IMR-90 (cell line): ENCODE measurements at regions of chr9 and their contacts with region 1.

Region 1: DNA sequence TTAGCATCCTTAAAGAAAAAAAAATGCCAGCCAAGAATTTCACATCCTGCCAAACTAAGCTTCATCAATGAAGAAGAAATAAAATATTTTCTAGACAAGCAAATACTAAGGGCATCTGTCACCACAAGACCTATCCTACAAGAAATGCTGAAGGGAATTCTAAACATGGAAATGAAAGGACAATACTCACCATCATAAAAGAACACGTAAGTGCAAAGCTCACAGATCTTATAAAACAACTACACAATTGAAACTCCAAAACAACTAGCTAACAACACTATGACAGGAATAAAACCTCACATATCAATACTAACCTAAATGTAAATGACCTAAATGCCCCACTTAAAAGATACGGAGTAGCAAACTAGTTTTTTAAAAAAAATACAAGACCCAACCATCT is 71.4 kb downstream of the TTC39B start:
- DNase-seq: no peak
- ATAC-seq: no peak
- H3K4me3 ChIP-seq: no peak overlapping the region
- H3K27ac ChIP-seq: no peak overlapping the region
- H3K4me1 ChIP-seq: no peaks in the 10 kb centered on the region
- H3K27me3 ChIP-seq: no peaks in the 10 kb centered on the region
- CTCF ChIP-seq: no peak
- POLR2A ChIP-seq: no peak
- RAD21 ChIP-seq: no peak

Region 2: GRCh38 chr9:15222313-15222712 is 13.3 kb before region 1 on chr9:
- CTCF ChIA-PET with region 1: no interaction called
- POLR2A ChIA-PET with region 1: no interaction called
- dilution Hi-C with region 1: no loop called
- in situ Hi-C with region 1: no loop called
- intact Hi-C with region 1: loop called (anchors 2 kb)
- DNase-seq: no peak
- ATAC-seq: no peak
- H3K4me3 ChIP-seq: no peak overlapping the region
- H3K27ac ChIP-seq: no peak overlapping the region
- H3K4me1 ChIP-seq: peaks cover 9% of the 10 kb centered on the region
- H3K27me3 ChIP-seq: no peaks in the 10 kb centered on the region
- CTCF ChIP-seq: no peak
- POLR2A ChIP-seq: no peak
- RAD21 ChIP-seq: no peak